Endothelial cell of umbilical vein (primary cell): ENCODE measurements at regions of chr18 and their contacts with region 1.

Region 1: GRCh38 chr18:11908182-11909060 is at the start of gene MPPE1:
- DNase-seq: peak; percentile 77
- H3K4me3 ChIP-seq: peak within 1 kb of the TSS; percentile 76 to 97 (median 93)
- H3K27ac ChIP-seq: peak within 1 kb of the TSS; percentile 93
- H3K4me1 ChIP-seq: peaks cover 9% of the 10 kb centered on the region
- H3K27me3 ChIP-seq: no peaks in the 10 kb centered on the region
- CTCF ChIP-seq: no peak
- POLR2A ChIP-seq: no peak
- total RNA-seq, gene MPPE1: 28.8 and 30.6 TPM in 2 replicates

Region 2: DNA sequence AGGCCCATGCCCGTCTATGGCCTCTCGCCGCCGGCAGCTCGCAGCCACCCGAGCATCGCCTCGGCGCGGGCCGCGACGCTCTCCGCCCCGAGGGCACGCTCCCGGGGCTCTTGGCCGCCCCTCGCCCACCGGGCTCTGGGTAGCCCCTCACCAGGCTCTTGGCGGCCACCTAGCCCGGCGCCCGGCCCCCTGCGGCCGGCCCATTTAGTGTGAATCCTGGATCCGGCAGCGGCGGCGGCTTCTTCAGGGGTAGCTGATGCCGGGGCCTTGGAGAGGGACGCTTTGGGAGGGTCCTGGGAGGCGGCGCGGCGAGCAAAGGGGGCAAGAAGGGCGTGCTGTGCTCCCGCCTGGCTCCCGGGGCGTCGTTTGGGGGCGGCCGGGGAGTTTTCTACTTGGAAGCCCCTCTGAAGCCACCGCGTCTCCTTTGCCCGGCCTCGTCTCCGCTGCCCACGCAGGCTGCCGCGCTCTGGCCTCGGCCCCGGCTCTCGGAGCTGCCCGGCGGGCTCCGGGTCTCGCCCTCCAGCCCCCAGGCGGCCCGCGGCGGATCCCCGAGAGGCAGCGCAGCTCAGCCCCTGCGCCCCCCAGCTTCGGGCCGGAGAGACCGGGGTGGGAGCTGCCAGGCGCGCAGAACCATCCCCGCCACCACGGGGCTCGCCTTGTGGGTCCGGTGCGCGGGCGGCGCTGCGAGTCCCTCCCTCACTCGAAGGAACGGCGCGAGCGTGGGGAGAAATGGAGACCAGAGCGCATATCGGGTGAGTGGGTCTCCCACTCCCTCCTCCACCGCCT is 759.6 kb before region 1 on chr18:
- CTCF ChIA-PET with region 1: no interaction called
- POLR2A ChIA-PET with region 1: no interaction called
- dilution Hi-C with region 1: no loop called
- intact Hi-C with region 1: no loop called
- DNase-seq: no peak
- H3K4me3 ChIP-seq: peak overlapping the region in 2 of 3 experiments; percentile 12 to 21
- H3K27ac ChIP-seq: no peak overlapping the region
- H3K4me1 ChIP-seq: no peaks in the 10 kb centered on the region
- H3K27me3 ChIP-seq: peaks cover 43 to 51% of the 10 kb centered on the region in 2 experiments
- CTCF ChIP-seq: no peak
- POLR2A ChIP-seq: no peak

Region 3: DNA sequence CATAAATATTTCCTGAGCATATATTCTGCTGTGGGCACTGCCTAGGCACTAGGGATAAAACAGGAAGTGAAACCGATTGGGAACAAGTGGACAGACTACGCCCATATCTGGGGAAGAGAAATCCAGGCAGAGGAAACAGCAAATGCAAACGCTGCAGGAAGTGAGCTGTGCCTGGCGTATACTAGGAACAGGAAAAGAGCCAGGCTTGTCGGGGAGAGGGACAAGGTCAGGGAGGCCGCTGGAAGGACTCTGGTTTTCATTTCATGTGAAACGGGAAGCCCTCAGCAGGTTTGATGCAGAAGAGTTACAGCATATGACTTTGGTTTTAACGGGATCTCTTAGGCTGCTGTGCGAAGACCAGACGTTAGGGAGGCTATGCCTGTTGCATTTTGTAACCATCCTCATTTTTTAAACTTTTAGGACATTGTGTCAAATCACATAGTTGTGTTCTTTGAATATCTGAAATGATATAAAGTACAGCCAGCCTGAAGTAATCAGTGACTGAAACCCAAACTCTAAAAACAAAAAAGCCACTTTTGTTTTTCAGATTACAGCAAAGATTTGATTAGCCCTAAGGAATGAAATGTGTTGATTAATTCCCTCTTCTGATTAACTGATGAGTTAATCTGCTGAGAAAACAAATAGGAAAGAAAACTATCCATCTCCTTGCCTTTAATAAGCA is 648.8 kb before region 1 on chr18:
- CTCF ChIA-PET with region 1: no interaction called
- POLR2A ChIA-PET with region 1: no interaction called
- dilution Hi-C with region 1: no loop called
- intact Hi-C with region 1: no loop called
- DNase-seq: no peak
- H3K4me3 ChIP-seq: no peak overlapping the region
- H3K27ac ChIP-seq: no peak overlapping the region
- H3K4me1 ChIP-seq: no peaks in the 10 kb centered on the region
- H3K27me3 ChIP-seq: no peaks in the 10 kb centered on the region
- CTCF ChIP-seq: no peak
- POLR2A ChIP-seq: no peak

Region 4: DNA sequence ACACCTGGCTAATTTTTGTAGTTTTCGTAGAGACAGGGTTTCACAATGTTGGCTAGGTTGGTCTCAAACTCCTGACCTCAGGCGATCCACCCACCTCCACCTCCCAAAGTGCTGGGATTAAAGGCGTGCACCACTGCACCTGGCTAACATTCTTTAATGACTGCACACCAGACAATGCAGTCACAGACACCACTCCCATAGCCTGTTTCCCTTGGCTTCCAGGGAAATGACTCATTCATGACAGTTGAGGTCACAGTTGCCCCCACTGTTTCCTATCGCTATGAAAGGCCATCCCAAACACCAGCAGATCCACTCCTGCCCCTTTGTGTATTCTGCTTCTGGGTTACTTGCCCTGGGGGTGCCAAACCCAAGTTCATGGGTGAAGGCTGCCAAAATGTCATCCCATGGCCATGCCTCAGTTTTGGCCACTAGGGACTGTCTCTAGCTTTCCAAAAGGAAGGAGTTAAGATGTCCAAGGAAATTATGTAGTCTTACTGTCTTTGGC is 48.5 kb before region 1 on chr18:
- CTCF ChIA-PET with region 1: no interaction called
- POLR2A ChIA-PET with region 1: no interaction called
- dilution Hi-C with region 1: no loop called
- intact Hi-C with region 1: loop called (anchors 2 kb)
- DNase-seq: peak; percentile 62
- H3K4me3 ChIP-seq: no peak overlapping the region
- H3K27ac ChIP-seq: peak overlapping the region; percentile 87
- H3K4me1 ChIP-seq: peaks cover 32% of the 10 kb centered on the region
- H3K27me3 ChIP-seq: no peaks in the 10 kb centered on the region
- CTCF ChIP-seq: no peak
- POLR2A ChIP-seq: no peak

Region 5: GRCh38 chr18:11947214-11948191 is 39.1 kb after region 1 on chr18:
- CTCF ChIA-PET with region 1: no interaction called
- POLR2A ChIA-PET with region 1: no interaction called
- dilution Hi-C with region 1: no loop called
- intact Hi-C with region 1: loop called (anchors 2 kb)
- DNase-seq: peak; percentile 97
- H3K4me3 ChIP-seq: peak overlapping the region; percentile 43 to 60 (median 57)
- H3K27ac ChIP-seq: peak overlapping the region; percentile 95
- H3K4me1 ChIP-seq: peaks cover 11% of the 10 kb centered on the region
- H3K27me3 ChIP-seq: no peaks in the 10 kb centered on the region
- CTCF ChIP-seq: no peak
- POLR2A ChIP-seq: peak; percentile 27

Region 6: DNA sequence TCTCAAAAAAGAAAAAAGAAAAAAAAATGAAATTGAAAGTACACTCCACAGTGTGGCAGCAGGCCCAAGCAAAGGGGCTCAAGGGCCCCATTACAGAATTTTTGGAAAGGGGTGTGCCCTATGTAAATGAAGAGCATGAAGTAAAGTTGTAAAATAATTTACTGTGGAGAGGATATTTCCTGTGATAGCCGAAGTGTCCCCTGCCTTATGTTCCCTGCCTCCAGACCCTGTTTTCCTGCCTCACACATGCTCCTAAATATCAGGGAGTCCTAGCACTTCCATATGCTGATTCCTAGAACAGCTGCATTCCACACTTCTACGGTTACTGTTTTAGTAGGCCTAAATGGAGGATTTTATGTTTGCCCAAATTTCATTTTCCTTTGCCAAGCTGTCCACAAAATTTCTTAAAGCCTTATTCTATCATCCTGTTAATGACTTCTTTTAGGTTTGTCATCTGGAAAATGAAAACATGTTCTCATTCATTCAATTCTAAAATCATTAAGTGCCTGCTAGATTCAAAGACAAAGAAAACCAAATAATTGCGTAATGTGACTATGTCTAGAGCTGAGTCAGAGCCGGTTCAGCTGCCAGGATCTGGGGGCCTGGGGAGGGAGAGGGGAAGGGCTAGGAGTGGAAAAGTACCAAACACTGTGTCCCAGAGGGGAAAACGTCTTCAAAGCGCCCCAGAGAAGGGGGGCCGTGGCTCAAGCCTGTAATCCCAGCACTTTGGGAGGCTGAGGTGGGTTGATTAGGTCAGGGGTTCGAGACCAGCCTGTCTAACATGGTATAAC is 47.0 kb after region 1 on chr18:
- CTCF ChIA-PET with region 1: no interaction called
- POLR2A ChIA-PET with region 1: no interaction called
- dilution Hi-C with region 1: no loop called
- intact Hi-C with region 1: loop called (anchors 1 kb)
- DNase-seq: peak; percentile 87
- H3K4me3 ChIP-seq: no peak overlapping the region
- H3K27ac ChIP-seq: peak overlapping the region; percentile 57
- H3K4me1 ChIP-seq: peaks cover 4% of the 10 kb centered on the region
- H3K27me3 ChIP-seq: no peaks in the 10 kb centered on the region
- CTCF ChIP-seq: no peak
- POLR2A ChIP-seq: no peak

Region 7: GRCh38 chr18:11980555-11981382 is 72.3 kb after region 1 on chr18:
- CTCF ChIA-PET with region 1: no interaction called
- POLR2A ChIA-PET with region 1: no interaction called
- dilution Hi-C with region 1: no loop called
- intact Hi-C with region 1: loop called (anchors 1 kb)
- DNase-seq: peak; percentile 98
- H3K4me3 ChIP-seq: peak overlapping the region; percentile 43 to 86 (median 72)
- H3K27ac ChIP-seq: peak overlapping the region; percentile 71
- H3K4me1 ChIP-seq: peaks cover 12% of the 10 kb centered on the region
- H3K27me3 ChIP-seq: peaks cover 3 to 4% of the 10 kb centered on the region in 2 experiments
- CTCF ChIP-seq: peak in 1 of 2 donors; percentile 19
- POLR2A ChIP-seq: peak; percentile 61